Activated CD4-positive, alpha-beta memory T cell treated with anti-CD3 and anti-CD28 coated beads, Interleukin-2, amount 10 ng/mL, durations not matched to agents 7 days and 5 days (primary cell): ENCODE measurements at regions of chr9 and their contacts with region 1.

Region 1: GRCh38 chr9:35646533-35647265 is 4.0 kb downstream of the SIT1 start:
- DNase-seq: peak; percentile 93
- H3K4me3 Mint-ChIP-seq: peak overlapping the region; percentile 88
- H3K27ac Mint-ChIP-seq: peak overlapping the region; percentile 92
- H3K4me1 Mint-ChIP-seq: peaks cover 51% of the 10 kb centered on the region
- H3K27me3 Mint-ChIP-seq: no peaks in the 10 kb centered on the region

Region 2: DNA sequence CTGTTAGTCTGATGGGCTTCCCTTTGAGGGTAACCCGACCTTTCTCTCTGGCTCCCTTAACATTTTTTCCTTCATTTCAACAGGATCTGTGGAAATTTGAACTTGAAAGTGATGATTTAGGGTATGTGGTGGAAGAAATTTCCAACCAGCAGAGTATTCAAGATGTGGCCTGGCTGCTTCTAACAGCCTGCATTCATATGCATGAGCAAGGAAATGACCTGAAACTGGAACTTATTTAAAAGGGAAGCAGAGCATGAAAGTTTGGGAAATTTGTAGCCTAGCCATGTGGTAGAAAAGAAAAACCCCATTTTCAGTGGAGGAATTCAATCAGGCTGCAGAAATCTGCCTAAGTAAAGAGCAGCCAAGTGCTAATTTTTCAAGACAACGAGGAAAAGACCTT is 443.2 kb before region 1 on chr9:
- CTCF ChIA-PET with region 1: no interaction called
- POLR2A ChIA-PET with region 1: no interaction called
- DNase-seq: no peak
- H3K4me3 Mint-ChIP-seq: no peak overlapping the region
- H3K27ac Mint-ChIP-seq: no peak overlapping the region
- H3K4me1 Mint-ChIP-seq: no peaks in the 10 kb centered on the region
- H3K27me3 Mint-ChIP-seq: peaks cover 2% of the 10 kb centered on the region

Region 3: DNA sequence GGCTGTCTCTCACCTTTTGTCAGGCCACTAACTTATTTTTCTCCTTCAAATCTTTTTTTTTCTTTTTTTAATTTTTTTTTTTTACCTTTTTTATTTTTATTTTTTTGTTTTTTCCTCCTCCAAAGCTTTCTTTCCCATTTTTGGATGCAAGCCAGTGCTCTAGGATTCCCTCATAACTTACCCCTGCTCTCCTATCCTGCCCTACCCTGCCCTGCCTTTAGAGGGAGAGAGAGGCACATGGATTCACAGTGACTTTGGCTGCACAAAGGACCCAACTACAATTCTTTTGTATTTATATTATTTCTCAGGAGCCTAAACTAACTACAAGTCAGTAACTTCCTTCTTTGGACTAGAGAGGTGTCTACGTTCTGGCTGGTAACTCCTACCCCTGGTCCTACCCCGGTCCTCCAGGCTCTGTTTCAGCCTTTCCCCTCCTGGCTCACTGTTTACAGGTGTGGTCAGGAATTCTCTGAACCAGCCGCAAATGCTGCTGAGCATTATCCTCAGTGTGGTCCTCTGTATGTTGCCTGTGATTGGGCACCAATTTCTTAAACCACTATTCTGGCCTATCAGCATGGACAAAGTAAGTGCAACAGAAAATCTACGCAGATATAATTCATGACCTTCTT is 165.2 kb before region 1 on chr9:
- CTCF ChIA-PET with region 1: no interaction called
- POLR2A ChIA-PET with region 1: no interaction called
- DNase-seq: peak; percentile 33
- H3K4me3 Mint-ChIP-seq: no peak overlapping the region
- H3K27ac Mint-ChIP-seq: no peak overlapping the region
- H3K4me1 Mint-ChIP-seq: no peaks in the 10 kb centered on the region
- H3K27me3 Mint-ChIP-seq: peaks cover 3% of the 10 kb centered on the region

Region 4: GRCh38 chr9:35603987-35604577 is 42.6 kb before region 1 on chr9:
- CTCF ChIA-PET with region 1: interaction called, 50 read pairs
- POLR2A ChIA-PET with region 1: interaction called, 14 read pairs
- DNase-seq: peak; percentile 100
- H3K4me3 Mint-ChIP-seq: peak overlapping the region; percentile 96
- H3K27ac Mint-ChIP-seq: peak overlapping the region; percentile 99
- H3K4me1 Mint-ChIP-seq: peaks cover 30% of the 10 kb centered on the region
- H3K27me3 Mint-ChIP-seq: no peaks in the 10 kb centered on the region

Region 5: GRCh38 chr9:35616681-35617459 is 29.8 kb before region 1 on chr9:
- CTCF ChIA-PET with region 1: interaction called, 51 read pairs
- POLR2A ChIA-PET with region 1: interaction called, 100 read pairs
- DNase-seq: peak; percentile 74
- H3K4me3 Mint-ChIP-seq: peak overlapping the region; percentile 73
- H3K27ac Mint-ChIP-seq: peak overlapping the region; percentile 42
- H3K4me1 Mint-ChIP-seq: peaks cover 43% of the 10 kb centered on the region
- H3K27me3 Mint-ChIP-seq: peaks cover 3% of the 10 kb centered on the region

Region 6: GRCh38 chr9:35657546-35658136 is 10.9 kb after region 1 on chr9 and contains the start of gene RMRP:
- CTCF ChIA-PET with region 1: interaction called, 223 read pairs
- POLR2A ChIA-PET with region 1: interaction called, 257 read pairs
- DNase-seq: peak; percentile 89
- H3K4me3 Mint-ChIP-seq: peak within 1 kb of the TSS; percentile 93
- H3K27ac Mint-ChIP-seq: peak within 1 kb of the TSS; percentile 94
- H3K4me1 Mint-ChIP-seq: peaks cover 62% of the 10 kb centered on the region
- H3K27me3 Mint-ChIP-seq: peaks cover 4% of the 10 kb centered on the region
- total RNA-seq, gene RMRP: 9,885 to 10,678 TPM

Region 7: DNA sequence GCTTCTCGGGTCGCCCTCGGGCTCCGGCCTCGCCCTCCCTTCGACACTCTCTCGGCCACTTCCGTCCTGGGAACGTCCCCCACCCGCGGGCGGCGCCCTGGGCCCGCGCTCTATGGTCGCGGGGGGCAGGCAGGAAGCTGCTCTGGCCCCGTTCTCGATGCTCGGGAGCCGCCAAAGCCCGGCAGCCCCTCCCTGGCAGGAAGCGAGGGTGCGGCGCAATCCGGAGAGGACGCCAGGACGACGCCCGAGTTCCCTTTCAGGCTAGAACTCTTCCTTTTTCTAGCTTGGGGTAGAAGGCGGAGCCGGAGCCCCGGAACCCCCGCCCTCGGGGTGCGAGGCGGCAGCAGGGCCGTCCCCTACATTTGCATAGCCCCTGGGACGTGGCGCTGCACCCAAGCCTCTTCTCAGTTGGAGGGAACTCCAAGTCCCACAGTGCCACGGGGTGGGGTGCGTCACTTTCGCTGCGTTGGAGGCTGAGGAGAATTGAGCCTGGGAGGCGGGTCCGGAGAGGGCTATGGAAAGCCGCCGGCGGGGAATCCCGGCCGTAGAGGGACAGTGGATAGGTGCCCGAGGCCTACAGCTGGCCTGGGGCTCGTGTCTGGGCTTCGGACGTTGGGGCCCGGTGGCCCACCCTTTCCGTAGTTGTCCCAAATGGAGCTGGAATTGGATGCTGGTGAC is 85.6 kb after region 1 on chr9 and contains the starts of genes CREB3 and TLN1:
- CTCF ChIA-PET with region 1: interaction called, 58 read pairs
- POLR2A ChIA-PET with region 1: interaction called, 85 read pairs
- DNase-seq: peak; percentile 99
- H3K4me3 Mint-ChIP-seq: no peak within 1 kb of the TSS
- H3K27ac Mint-ChIP-seq: peak within 1 kb of the TSS; percentile 89
- H3K4me1 Mint-ChIP-seq: peaks cover 23% of the 10 kb centered on the region
- H3K27me3 Mint-ChIP-seq: no peaks in the 10 kb centered on the region
- total RNA-seq, gene CREB3: 23.2 to 24.1 TPM
- total RNA-seq, gene TLN1: 341 to 354 TPM